Heart left ventricle (tissue), 16 donors: ENCODE measurements at regions of chr4 and their contacts with region 1.

Region 1: GRCh38 chr4:4488405-4489404 is 53.1 kb downstream of the STX18 start:
- DNase-seq: peak in 4 of 5 donors; percentile 35 to 55 (median 44)
- ATAC-seq: peak; percentile 82 to 92 (median 86)
- H3K4me3 ChIP-seq: no peak overlapping the region
- H3K27ac ChIP-seq: no peak overlapping the region
- H3K4me1 ChIP-seq: peaks cover 0 to 19% (median 0%) of the 10 kb centered on the region in 12 donors
- H3K27me3 ChIP-seq: no peaks in the 10 kb centered on the region
- CTCF ChIP-seq: peak; percentile 79 to 94 (median 88)
- POLR2A ChIP-seq: no peak

Region 2: GRCh38 chr4:4440333-4441061 is 48.2 kb before region 1 on chr4:
- intact Hi-C with region 1: no loop called
- DNase-seq: no peak
- ATAC-seq: no peak
- H3K4me3 ChIP-seq: no peak overlapping the region
- H3K27ac ChIP-seq: no peak overlapping the region
- H3K4me1 ChIP-seq: peaks cover 0 to 2% (median 0%) of the 10 kb centered on the region in 12 donors
- H3K27me3 ChIP-seq: no peaks in the 10 kb centered on the region
- CTCF ChIP-seq: no peak
- POLR2A ChIP-seq: no peak

Region 3: GRCh38 chr4:4859390-4859842 is 370.7 kb after region 1 on chr4 and contains the start of gene MSX1:
- intact Hi-C with region 1: loop called in 1 of 10 experiments (anchors 10 kb)
- DNase-seq: peak; percentile 89 to 92 (median 90)
- ATAC-seq: peak; percentile 92 to 98 (median 96)
- H3K4me3 ChIP-seq: peak within 1 kb of the TSS; percentile 58 to 95 (median 76)
- H3K27ac ChIP-seq: peak within 1 kb of the TSS; percentile 48 to 92 (median 84)
- H3K4me1 ChIP-seq: peaks cover 0 to 69% (median 32%) of the 10 kb centered on the region in 12 donors
- H3K27me3 ChIP-seq: peaks cover 72 to 98% (median 91%) of the 10 kb centered on the region in 9 donors
- CTCF ChIP-seq: no peak
- POLR2A ChIP-seq: peak; percentile 78 to 94
- total RNA-seq, gene MSX1: 2.7 to 7.4 (median 4.2) TPM

Region 4: GRCh38 chr4:4875147-4875546 is 386.4 kb after region 1 on chr4:
- intact Hi-C with region 1: loop called in 9 of 10 experiments (anchors 5 to 10 kb)
- DNase-seq: no peak
- ATAC-seq: no peak
- H3K4me3 ChIP-seq: no peak overlapping the region
- H3K27ac ChIP-seq: no peak overlapping the region
- H3K4me1 ChIP-seq: peaks cover 0 to 12% (median 2%) of the 10 kb centered on the region in 12 donors
- H3K27me3 ChIP-seq: peaks cover 51 to 98% (median 84%) of the 10 kb centered on the region in 9 donors
- CTCF ChIP-seq: no peak
- POLR2A ChIP-seq: no peak

Region 5: GRCh38 chr4:4985844-4986243 is 497.1 kb after region 1 on chr4:
- intact Hi-C with region 1: loop called in 2 of 10 experiments (anchors 5 to 10 kb)
- DNase-seq: no peak
- ATAC-seq: no peak
- H3K4me3 ChIP-seq: no peak overlapping the region
- H3K27ac ChIP-seq: no peak overlapping the region
- H3K4me1 ChIP-seq: peaks cover 0 to 2% (median 0%) of the 10 kb centered on the region in 12 donors
- H3K27me3 ChIP-seq: peaks cover 0 to 3% (median 0%) of the 10 kb centered on the region in 9 donors
- CTCF ChIP-seq: no peak
- POLR2A ChIP-seq: no peak

Region 6: DNA sequence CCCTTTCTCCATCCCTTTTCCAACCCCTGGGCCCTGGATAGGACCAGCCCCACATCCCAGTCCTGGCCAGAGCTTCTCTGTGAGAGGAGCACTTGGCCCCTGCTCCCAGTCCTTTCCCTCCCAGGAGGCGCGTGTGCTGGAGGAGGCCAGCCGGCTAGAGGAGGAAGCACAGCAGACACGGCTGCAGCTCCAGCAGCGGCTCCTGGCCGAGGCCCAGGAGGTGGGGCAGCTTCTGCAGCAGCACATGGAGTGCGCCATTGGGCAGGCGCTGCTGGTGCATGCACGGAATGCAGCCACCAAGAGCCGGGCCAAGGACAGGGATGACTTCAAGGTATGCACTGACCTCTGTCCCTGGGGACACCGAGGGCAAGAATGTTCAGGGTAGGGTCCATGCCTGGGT is 1309.8 kb after region 1 on chr4:
- intact Hi-C with region 1: loop called in 1 of 10 experiments (anchors 10 kb)
- DNase-seq: peak; percentile 15 to 75 (median 46)
- ATAC-seq: peak; percentile 37 to 74 (median 70)
- H3K4me3 ChIP-seq: no peak overlapping the region
- H3K27ac ChIP-seq: no peak overlapping the region
- H3K4me1 ChIP-seq: peaks cover 0 to 3% (median 0%) of the 10 kb centered on the region in 12 donors
- H3K27me3 ChIP-seq: no peaks in the 10 kb centered on the region
- CTCF ChIP-seq: no peak
- POLR2A ChIP-seq: no peak